H1 (cell line): ENCODE measurements at regions of chr19 and their contacts with region 1.

Region 1: DNA sequence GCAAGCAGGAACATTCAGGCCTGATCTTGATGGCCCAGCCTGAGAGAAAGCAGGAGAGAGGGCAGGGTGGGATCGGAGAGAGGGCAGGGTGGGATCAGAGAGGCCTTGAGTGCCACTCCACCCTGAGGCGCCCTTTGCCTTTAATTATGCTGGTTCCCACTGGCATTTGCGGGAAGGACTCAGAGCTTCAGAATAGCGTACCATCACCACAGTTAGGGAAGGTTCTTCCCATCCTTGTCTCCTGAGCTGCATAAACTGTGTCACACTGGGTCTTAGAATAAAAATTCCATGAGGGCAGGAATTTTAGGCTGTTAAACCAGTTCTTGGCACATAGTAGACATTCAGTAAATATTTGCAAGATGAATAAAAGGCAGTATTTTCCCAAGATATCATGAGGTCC is 24.3 kb downstream of the PPP2R1A start:
- DNase-seq: no peak
- H3K4me3 ChIP-seq: no peak overlapping the region
- H3K27ac ChIP-seq: no peak overlapping the region
- H3K4me1 ChIP-seq: no peaks in the 10 kb centered on the region
- H3K27me3 ChIP-seq: no peaks in the 10 kb centered on the region
- CTCF ChIP-seq: no peak
- EP300 ChIP-seq: no peak
- POLR2A ChIP-seq: no peak
- RAD21 ChIP-seq: no peak

Region 2: DNA sequence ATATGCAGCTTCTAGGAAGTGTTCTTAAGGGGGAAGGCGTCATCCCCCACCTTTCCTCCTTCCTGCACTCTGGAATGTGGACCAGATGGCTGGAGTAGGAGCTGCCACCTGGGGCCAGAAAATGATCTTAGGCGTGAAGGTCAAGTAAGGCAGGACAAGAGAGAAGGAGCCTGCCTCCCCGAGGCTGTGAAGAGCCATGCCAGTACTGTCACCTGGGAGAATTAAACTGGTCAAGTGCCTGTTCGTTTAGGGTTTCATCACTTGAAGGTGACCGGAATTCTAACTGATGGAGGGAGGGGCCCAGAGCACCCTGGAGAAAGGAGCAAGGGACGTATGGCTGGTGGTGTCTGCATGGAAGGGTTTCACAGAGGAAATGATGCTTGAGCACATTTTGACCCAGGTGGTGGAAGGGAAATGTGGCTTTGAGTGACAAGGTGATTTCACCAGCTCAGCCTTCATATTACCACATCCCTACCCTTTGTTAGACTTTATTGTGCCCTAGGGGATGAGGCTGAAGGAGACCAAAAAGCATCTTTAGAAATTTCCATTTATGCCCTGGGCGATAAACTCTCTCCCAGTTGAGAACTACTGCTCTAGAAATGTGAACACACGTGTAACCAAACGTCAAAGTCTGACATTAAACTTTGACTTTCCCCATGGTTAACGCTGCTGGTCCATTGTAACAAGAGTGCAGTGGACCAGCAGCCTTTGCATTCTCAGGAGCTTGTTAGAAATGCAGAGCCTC is 13.2 kb after region 1 on chr19:
- CTCF ChIA-PET with region 1: no interaction called
- POLR2A ChIA-PET with region 1: interaction called, 10 read pairs
- DNase-seq: no peak
- H3K4me3 ChIP-seq: no peak overlapping the region
- H3K27ac ChIP-seq: no peak overlapping the region
- H3K4me1 ChIP-seq: no peaks in the 10 kb centered on the region
- H3K27me3 ChIP-seq: no peaks in the 10 kb centered on the region
- CTCF ChIP-seq: no peak
- EP300 ChIP-seq: no peak
- POLR2A ChIP-seq: no peak
- RAD21 ChIP-seq: no peak

Region 3: GRCh38 chr19:52269338-52270261 is 55.4 kb after region 1 on chr19 and contains the start of gene ZNF766:
- CTCF ChIA-PET with region 1: no interaction called
- POLR2A ChIA-PET with region 1: no interaction called
- DNase-seq: peak; percentile 79 to 97
- H3K4me3 ChIP-seq: peak within 1 kb of the TSS; percentile 89 to 100 (median 98)
- H3K27ac ChIP-seq: peak within 1 kb of the TSS; percentile 93
- H3K4me1 ChIP-seq: no peaks in the 10 kb centered on the region; a peak in 3 of 7 replicates
- H3K27me3 ChIP-seq: no peaks in the 10 kb centered on the region
- CTCF ChIP-seq: no peak
- EP300 ChIP-seq: no peak
- POLR2A ChIP-seq: peak; percentile 89 to 95
- RAD21 ChIP-seq: no peak
- total RNA-seq, gene ZNF766: 31.9 and 34.6 TPM in 2 replicates

Region 4: DNA sequence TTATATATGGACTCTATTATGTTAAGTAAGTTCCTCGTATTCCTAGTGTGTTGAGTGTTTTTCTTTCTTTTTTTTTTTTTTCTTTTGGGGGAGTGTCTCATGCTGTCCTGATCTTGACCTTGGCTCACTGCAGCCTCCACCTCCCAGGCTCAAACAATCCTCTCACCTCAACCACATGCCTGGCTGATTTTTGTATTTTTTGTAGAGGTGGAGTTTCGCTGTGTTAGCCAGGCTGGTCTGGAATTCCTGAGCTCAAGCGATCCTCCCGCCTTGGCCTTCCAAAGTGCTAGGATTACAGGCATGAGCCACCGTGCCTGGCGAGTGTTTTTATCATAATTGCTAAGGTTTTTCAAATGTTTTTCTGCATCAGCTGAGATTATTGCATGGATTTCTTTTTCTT is 72.1 kb after region 1 on chr19:
- CTCF ChIA-PET with region 1: no interaction called
- POLR2A ChIA-PET with region 1: no interaction called
- DNase-seq: no peak
- H3K4me3 ChIP-seq: no peak overlapping the region
- H3K27ac ChIP-seq: no peak overlapping the region
- H3K4me1 ChIP-seq: no peaks in the 10 kb centered on the region
- H3K27me3 ChIP-seq: no peaks in the 10 kb centered on the region
- CTCF ChIP-seq: no peak
- EP300 ChIP-seq: no peak
- POLR2A ChIP-seq: no peak
- RAD21 ChIP-seq: no peak

Region 5: GRCh38 chr19:52307275-52307674 is 93.1 kb after region 1 on chr19:
- CTCF ChIA-PET with region 1: no interaction called
- POLR2A ChIA-PET with region 1: no interaction called
- DNase-seq: peak in 1 of 2 experiments; percentile 53
- H3K4me3 ChIP-seq: no peak overlapping the region
- H3K27ac ChIP-seq: no peak overlapping the region
- H3K4me1 ChIP-seq: no peaks in the 10 kb centered on the region
- H3K27me3 ChIP-seq: no peaks in the 10 kb centered on the region
- CTCF ChIP-seq: no peak
- EP300 ChIP-seq: no peak
- POLR2A ChIP-seq: no peak
- RAD21 ChIP-seq: no peak